ENCODE measurements at regions of chr7 and their contacts with region 1.

Region 1: GRCh38 chr7:100556541-100556940 is 17.2 kb downstream of the SAP25 start:
- DNase-seq: no peak
- H3K4me3 ChIP-seq: no peak overlapping the region
- H3K4me3 Mint-ChIP-seq: no peak overlapping the region
- H3K27ac ChIP-seq: no peak overlapping the region
- H3K27ac Mint-ChIP-seq: peak overlapping the region in 4 of 7 donors; percentile 12 to 82 (median 62)
- H3K4me1 ChIP-seq: peaks cover 12% of the 10 kb centered on the region
- H3K4me1 Mint-ChIP-seq: peaks cover 8 to 26% (median 13%) of the 10 kb centered on the region in 4 donors
- H3K27me3 ChIP-seq: no peaks in the 10 kb centered on the region
- H3K27me3 Mint-ChIP-seq: no peaks in the 10 kb centered on the region

Region 2: GRCh38 chr7:100275120-100275519 is 281.4 kb before region 1 on chr7:
- CTCF ChIA-PET with region 1: no interaction called
- POLR2A ChIA-PET with region 1: no interaction called
- intact Hi-C with region 1: no loop called
- DNase-seq: no peak
- H3K4me3 ChIP-seq: no peak overlapping the region
- H3K4me3 Mint-ChIP-seq: no peak overlapping the region
- H3K27ac ChIP-seq: no peak overlapping the region
- H3K27ac Mint-ChIP-seq: peak overlapping the region in 1 of 7 donors; percentile 37
- H3K4me1 ChIP-seq: peaks cover 5% of the 10 kb centered on the region
- H3K4me1 Mint-ChIP-seq: peaks cover 5 to 14% (median 7%) of the 10 kb centered on the region in 4 donors
- H3K27me3 ChIP-seq: no peaks in the 10 kb centered on the region
- H3K27me3 Mint-ChIP-seq: no peaks in the 10 kb centered on the region

Region 3: GRCh38 chr7:100478966-100479665 is 77.4 kb before region 1 on chr7 and contains the start of gene TSC22D4:
- CTCF ChIA-PET with region 1: interaction called, 44 read pairs
- POLR2A ChIA-PET with region 1: interaction called, 20 read pairs
- intact Hi-C with region 1: loop called (anchors 1 kb)
- DNase-seq: peak; percentile 93 to 97 (median 95)
- H3K4me3 ChIP-seq: peak within 1 kb of the TSS; percentile 81 to 95
- H3K4me3 Mint-ChIP-seq: peak within 1 kb of the TSS; percentile 82 to 99 (median 98)
- H3K27ac ChIP-seq: peak within 1 kb of the TSS; percentile 75
- H3K27ac Mint-ChIP-seq: peak within 1 kb of the TSS; percentile 75 to 99 (median 94)
- H3K4me1 ChIP-seq: peaks cover 58% of the 10 kb centered on the region
- H3K4me1 Mint-ChIP-seq: peaks cover 28 to 57% (median 38%) of the 10 kb centered on the region in 4 donors
- H3K27me3 ChIP-seq: no peaks in the 10 kb centered on the region
- H3K27me3 Mint-ChIP-seq: no peaks in the 10 kb centered on the region
- total RNA-seq, gene TSC22D4: 144 to 154 TPM

Region 4: GRCh38 chr7:100516135-100516812 is 40.3 kb before region 1 on chr7:
- CTCF ChIA-PET with region 1: interaction called, 40 read pairs
- POLR2A ChIA-PET with region 1: interaction called, 18 read pairs
- intact Hi-C with region 1: loop called (anchors 1 kb)
- DNase-seq: peak; percentile 74 to 82 (median 80)
- H3K4me3 ChIP-seq: peak overlapping the region in 1 of 2 donors; percentile 33
- H3K4me3 Mint-ChIP-seq: peak overlapping the region; percentile 61 to 83 (median 78)
- H3K27ac ChIP-seq: peak overlapping the region; percentile 24
- H3K27ac Mint-ChIP-seq: peak overlapping the region; percentile 72 to 89 (median 82)
- H3K4me1 ChIP-seq: peaks cover 30% of the 10 kb centered on the region
- H3K4me1 Mint-ChIP-seq: peaks cover 21 to 47% (median 28%) of the 10 kb centered on the region in 4 donors
- H3K27me3 ChIP-seq: no peaks in the 10 kb centered on the region
- H3K27me3 Mint-ChIP-seq: no peaks in the 10 kb centered on the region

Region 5: DNA sequence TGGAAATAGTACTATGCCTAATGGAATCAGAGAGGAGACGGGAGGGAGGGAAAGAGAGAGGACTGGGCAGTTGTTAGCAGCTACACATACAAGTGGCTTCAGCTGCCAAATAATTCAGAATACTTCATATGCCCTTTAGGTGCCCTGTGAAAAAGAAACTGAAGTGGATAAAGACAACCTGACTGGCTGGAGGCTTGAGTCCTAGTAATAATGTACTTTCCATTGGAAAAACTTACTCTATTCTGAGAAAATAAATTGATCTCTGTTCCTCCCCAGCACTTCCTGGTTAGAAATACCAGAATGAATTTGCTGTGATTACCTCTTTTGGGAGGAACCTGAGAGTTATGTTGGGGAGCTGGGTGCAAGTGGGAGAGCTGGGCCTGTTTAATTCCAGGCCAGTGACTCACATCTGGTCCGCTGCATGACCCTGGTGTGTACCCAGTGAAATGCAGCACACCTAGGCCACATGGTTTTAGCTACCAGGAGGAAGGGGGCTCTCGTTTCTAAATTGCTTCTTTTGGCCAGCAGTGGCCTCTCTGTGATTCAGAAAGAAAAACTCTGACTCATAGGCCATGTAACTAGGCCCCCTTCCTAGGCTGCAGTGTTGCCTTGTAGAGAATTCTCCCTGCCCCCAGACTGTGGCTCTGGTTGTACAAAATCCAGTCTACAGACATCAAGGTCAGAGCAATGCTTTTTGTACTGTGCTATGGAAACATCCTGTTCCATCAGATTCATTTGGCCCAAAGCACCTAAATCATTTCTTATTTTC is 11.0 kb before region 1 on chr7:
- CTCF ChIA-PET with region 1: interaction called, 254 read pairs
- POLR2A ChIA-PET with region 1: interaction called, 51 read pairs
- intact Hi-C with region 1: no loop called
- DNase-seq: peak in 1 of 5 donors; percentile 84
- H3K4me3 ChIP-seq: peak overlapping the region; percentile 25 to 29
- H3K4me3 Mint-ChIP-seq: peak overlapping the region; percentile 69 to 97 (median 88)
- H3K27ac ChIP-seq: peak overlapping the region; percentile 66
- H3K27ac Mint-ChIP-seq: peak overlapping the region; percentile 61 to 98 (median 91)
- H3K4me1 ChIP-seq: peaks cover 99% of the 10 kb centered on the region
- H3K4me1 Mint-ChIP-seq: peaks cover 76 to 100% (median 89%) of the 10 kb centered on the region in 4 donors
- H3K27me3 ChIP-seq: no peaks in the 10 kb centered on the region
- H3K27me3 Mint-ChIP-seq: no peaks in the 10 kb centered on the region

Region 6: DNA sequence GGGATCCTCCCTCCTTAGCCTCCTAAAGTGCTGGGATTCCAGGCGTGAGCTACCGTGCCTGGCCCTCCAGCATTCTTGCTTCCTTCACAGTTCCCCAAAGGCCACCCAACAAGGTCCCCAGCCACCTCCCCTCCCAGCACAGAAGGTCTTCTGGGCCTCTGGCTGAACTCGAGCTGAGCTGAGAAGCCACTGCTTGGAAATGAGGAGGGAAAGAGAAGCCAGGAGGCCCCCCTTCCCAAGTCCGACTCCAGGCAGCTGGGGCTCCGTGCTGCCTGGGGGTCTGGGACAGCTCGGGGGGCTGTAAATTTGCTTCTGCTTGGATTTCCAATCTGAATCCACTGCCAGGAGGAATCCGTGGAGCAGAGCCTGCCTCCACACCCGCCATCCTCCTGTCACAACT is 158.2 kb after region 1 on chr7:
- CTCF ChIA-PET with region 1: no interaction called
- POLR2A ChIA-PET with region 1: no interaction called
- intact Hi-C with region 1: no loop called
- DNase-seq: no peak
- H3K4me3 ChIP-seq: no peak overlapping the region
- H3K4me3 Mint-ChIP-seq: no peak overlapping the region
- H3K27ac ChIP-seq: no peak overlapping the region
- H3K27ac Mint-ChIP-seq: no peak overlapping the region
- H3K4me1 ChIP-seq: no peaks in the 10 kb centered on the region
- H3K4me1 Mint-ChIP-seq: no peaks in the 10 kb centered on the region
- H3K27me3 ChIP-seq: no peaks in the 10 kb centered on the region
- H3K27me3 Mint-ChIP-seq: peaks cover 7 to 15% of the 10 kb centered on the region in 2 donors

Region 7: GRCh38 chr7:100726996-100727761 is 170.6 kb after region 1 on chr7:
- CTCF ChIA-PET with region 1: interaction called, 47 read pairs
- POLR2A ChIA-PET with region 1: interaction called, 3 read pairs
- intact Hi-C with region 1: loop called (anchors 1 kb)
- DNase-seq: no peak
- H3K4me3 ChIP-seq: no peak overlapping the region
- H3K4me3 Mint-ChIP-seq: no peak overlapping the region
- H3K27ac ChIP-seq: no peak overlapping the region
- H3K27ac Mint-ChIP-seq: no peak overlapping the region
- H3K4me1 ChIP-seq: peaks cover 5% of the 10 kb centered on the region
- H3K4me1 Mint-ChIP-seq: peaks cover 0 to 4% (median 3%) of the 10 kb centered on the region in 4 donors
- H3K27me3 ChIP-seq: no peaks in the 10 kb centered on the region
- H3K27me3 Mint-ChIP-seq: peaks cover 12 to 22% of the 10 kb centered on the region in 2 donors

Region 8: GRCh38 chr7:100739934-100740333 is 183.4 kb after region 1 on chr7:
- CTCF ChIA-PET with region 1: no interaction called
- POLR2A ChIA-PET with region 1: no interaction called
- intact Hi-C with region 1: no loop called
- DNase-seq: no peak
- H3K4me3 ChIP-seq: no peak overlapping the region
- H3K4me3 Mint-ChIP-seq: no peak overlapping the region
- H3K27ac ChIP-seq: no peak overlapping the region
- H3K27ac Mint-ChIP-seq: no peak overlapping the region
- H3K4me1 ChIP-seq: no peaks in the 10 kb centered on the region
- H3K4me1 Mint-ChIP-seq: peaks cover 0 to 2% (median under 1%) of the 10 kb centered on the region in 4 donors
- H3K27me3 ChIP-seq: no peaks in the 10 kb centered on the region
- H3K27me3 Mint-ChIP-seq: peaks cover 7 to 8% of the 10 kb centered on the region in 2 donors

Measured in CD4-positive, alpha-beta memory T cell (primary cell).